Calu3 (cell line): ENCODE measurements at regions of chr11 and their contacts with region 1.

Region 1: DNA sequence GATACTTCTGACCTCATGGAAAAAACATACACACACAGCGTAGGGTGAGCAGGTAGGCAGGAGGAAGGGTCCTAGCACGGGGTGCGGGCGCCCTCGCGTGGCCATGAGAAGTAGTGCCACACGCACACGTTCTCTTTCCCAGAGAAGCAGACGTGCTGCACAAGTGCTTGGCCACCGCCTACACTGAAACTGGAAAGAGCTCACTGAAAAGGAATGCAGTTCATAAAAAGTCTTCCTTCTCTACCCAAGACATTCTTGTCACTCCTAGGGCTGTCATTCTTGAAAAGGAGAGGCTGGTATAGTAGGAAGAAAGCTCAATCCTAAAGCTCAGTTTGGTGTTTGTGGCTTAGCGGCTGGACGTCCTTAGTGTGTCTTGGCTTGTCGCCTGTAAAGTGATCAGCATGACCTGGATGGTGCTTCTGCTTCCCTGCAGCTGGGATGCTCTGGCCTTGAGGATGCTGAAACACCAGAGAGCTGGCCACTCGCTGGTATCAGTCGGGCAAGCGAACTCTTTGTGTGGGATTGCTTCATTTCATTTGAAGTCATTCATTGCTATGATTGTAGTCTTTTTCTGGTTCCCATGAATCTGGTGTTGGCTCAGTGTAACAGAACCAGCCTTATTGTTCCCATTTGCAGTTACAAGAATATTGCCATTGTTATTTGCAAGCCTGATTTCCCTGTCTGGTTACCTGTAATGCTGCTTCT is 303.8 kb downstream of the NTM start:
- DNase-seq: peak; percentile 64
- H3K4me3 Mint-ChIP-seq: no peak overlapping the region
- H3K27ac Mint-ChIP-seq: no peak overlapping the region
- H3K4me1 Mint-ChIP-seq: no peaks in the 10 kb centered on the region
- H3K27me3 Mint-ChIP-seq: no peaks in the 10 kb centered on the region
- CTCF ChIP-seq: peak; percentile 49

Region 2: DNA sequence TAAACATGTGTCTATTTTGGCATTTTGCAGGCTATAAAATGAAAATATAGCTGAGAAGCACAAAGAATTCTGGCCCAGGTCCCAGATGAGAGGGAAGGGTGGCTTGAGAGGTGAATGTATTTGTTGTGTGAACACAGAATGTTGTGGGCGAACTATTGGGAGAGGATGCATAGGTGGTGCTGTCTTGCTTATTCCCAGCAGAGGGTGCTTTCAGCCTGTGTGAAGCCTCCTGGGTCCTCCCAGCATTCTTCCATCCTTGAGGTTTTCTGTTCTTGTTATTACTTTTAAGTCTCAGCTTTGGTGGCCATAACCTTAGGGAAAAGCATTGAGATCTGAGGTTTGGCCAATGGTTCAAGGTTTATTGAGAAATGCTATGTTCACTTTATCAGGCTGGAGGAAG is 649.2 kb before region 1 on chr11:
- CTCF ChIA-PET with region 1: no interaction called
- intact Hi-C with region 1: loop called (anchors 10 kb)
- DNase-seq: no peak
- H3K4me3 Mint-ChIP-seq: no peak overlapping the region
- H3K27ac Mint-ChIP-seq: no peak overlapping the region
- H3K4me1 Mint-ChIP-seq: no peaks in the 10 kb centered on the region
- H3K27me3 Mint-ChIP-seq: no peaks in the 10 kb centered on the region
- CTCF ChIP-seq: no peak

Region 3: GRCh38 chr11:131694526-131695424 is 20.6 kb after region 1 on chr11:
- CTCF ChIA-PET with region 1: no interaction called
- intact Hi-C with region 1: no loop called
- DNase-seq: peak; percentile 45
- H3K4me3 Mint-ChIP-seq: no peak overlapping the region
- H3K27ac Mint-ChIP-seq: no peak overlapping the region
- H3K4me1 Mint-ChIP-seq: no peaks in the 10 kb centered on the region
- H3K27me3 Mint-ChIP-seq: no peaks in the 10 kb centered on the region
- CTCF ChIP-seq: peak; percentile 27